OCI-LY7 (cell line): ENCODE measurements at regions of chr1 and their contacts with region 1.

Region 1: DNA sequence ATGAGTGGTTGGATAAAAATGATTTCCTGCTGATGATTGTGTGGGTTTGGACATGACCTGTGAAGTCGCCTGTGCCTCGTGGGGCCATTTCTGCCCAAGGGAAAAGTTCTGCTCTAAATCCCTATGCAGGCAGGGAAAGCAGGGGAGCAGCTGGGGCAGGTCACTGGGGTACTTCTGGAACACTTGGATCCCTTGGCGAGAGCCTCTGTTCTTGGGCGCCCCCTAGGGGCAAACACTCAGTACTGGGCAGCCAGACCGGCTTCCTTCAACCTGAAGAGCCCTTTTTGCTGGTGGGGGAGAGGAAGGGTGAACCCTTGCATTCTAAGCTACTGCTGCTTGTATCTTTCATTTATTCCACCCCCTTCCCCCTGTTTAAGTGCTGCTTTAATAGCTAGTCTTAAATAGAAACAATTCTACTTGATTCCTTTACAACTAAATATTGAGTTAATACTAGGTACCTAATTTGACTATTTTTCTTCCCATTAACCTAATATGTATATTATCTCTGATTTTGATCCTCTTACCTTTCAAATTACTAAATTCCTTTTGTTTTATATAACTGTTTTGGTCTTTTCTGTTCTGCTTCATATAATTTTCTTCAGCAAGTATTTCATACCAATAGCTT is 5.1 kb upstream of the CLEC20A start:
- DNase-seq: peak; percentile 74
- H3K4me3 ChIP-seq: no peak overlapping the region
- H3K27ac ChIP-seq: no peak overlapping the region
- H3K4me1 ChIP-seq: no peaks in the 10 kb centered on the region
- CTCF ChIP-seq: peak; percentile 91

Region 2: GRCh38 chr1:178310685-178311105 is 191.1 kb before region 1 on chr1:
- CTCF ChIA-PET with region 1: no interaction called
- POLR2A ChIA-PET with region 1: interaction called, 4 read pairs
- intact Hi-C with region 1: loop called (anchors 2 kb)
- DNase-seq: peak; percentile 70
- H3K4me3 ChIP-seq: no peak overlapping the region
- H3K27ac ChIP-seq: no peak overlapping the region
- H3K4me1 ChIP-seq: no peaks in the 10 kb centered on the region
- CTCF ChIP-seq: peak; percentile 90

Region 3: DNA sequence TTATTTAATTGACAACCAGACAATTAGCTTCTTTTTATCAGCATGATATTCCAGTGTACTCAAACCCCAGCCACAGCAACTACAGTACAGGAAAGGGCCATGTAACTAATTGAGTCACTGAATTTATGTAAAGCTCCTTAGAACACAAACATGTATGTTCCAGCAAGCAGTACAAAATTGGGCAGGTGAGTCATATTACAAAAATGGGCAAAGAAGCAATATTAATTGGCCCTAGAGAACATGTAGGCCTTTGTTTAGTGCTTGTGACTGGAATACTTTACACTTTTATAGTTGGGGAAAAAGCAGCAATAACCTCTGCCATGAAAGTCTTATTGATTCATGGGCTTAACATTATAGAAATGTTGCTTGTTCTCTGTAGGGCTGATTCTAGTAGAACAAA is 36.8 kb before region 1 on chr1:
- CTCF ChIA-PET with region 1: no interaction called
- POLR2A ChIA-PET with region 1: no interaction called
- intact Hi-C with region 1: no loop called
- DNase-seq: no peak
- H3K4me3 ChIP-seq: no peak overlapping the region
- H3K27ac ChIP-seq: no peak overlapping the region
- H3K4me1 ChIP-seq: no peaks in the 10 kb centered on the region
- CTCF ChIP-seq: no peak